ENCODE measurements at regions of chr7 and their contacts with region 1.

Region 1: DNA sequence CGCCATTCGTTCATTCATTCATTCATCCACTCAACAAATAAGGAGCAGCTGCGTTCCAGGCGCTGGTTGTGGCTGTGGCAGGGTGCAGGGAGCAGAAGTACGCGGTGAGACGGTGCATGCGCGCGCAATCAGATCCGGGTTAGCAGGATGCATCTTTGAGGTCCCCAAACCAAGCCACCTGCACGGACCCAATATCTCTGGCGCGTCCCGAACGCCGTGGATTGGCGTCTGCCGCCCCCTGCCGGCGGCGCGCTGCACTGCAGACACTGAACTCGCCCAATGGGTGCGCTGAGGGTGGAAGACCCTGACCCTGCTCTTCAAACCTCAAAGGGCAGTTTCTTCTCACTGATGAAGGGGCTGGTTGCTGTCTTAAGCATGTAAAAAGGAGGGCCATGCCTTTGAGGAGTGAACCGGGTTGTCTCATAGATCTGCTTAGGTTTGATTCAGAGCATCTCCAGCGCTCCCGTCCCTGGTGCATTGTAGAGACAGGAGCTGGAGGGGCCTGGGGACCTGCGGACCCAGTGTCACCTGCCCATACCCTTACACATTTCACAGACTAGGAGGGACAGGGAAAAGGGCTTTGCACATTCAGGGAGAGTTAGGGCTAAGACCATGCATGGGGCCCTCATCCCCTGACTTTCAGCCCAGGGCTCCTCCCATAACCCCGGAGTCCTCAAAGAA is 102.5 kb downstream of the RAMP3 start:
- DNase-seq: peak; percentile 77
- ATAC-seq: peak; percentile 87
- H3K4me3 Mint-ChIP-seq: no peak overlapping the region
- H3K27ac Mint-ChIP-seq: no peak overlapping the region
- H3K4me1 Mint-ChIP-seq: peaks cover 2% of the 10 kb centered on the region
- H3K27me3 Mint-ChIP-seq: peaks cover 20% of the 10 kb centered on the region

Region 2: DNA sequence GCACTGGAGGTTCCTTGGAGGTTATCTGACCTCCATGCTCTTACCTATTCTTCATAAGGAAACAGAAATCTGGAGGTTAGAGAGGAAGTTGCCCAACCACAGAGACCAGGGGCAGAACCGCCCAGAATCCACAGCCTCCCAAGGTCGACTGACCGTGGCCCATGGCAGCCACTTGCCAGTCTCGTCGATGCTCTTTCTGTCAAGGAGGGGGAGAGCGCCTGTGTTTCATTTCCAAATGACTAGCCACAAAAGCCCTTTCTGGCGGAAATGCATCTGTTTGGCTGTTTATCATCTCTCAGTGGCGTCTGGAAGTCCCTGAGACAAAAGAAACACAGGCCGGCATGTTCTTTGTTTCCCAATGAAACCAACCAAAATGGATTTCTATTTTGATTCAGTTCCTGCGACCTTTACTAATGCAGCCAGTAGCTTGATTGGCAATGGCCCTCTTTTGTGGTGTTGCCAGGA is 99.7 kb before region 1 on chr7:
- CTCF ChIA-PET with region 1: interaction called, 89 read pairs
- DNase-seq: no peak
- ATAC-seq: no peak
- H3K4me3 Mint-ChIP-seq: no peak overlapping the region
- H3K27ac Mint-ChIP-seq: no peak overlapping the region
- H3K4me1 Mint-ChIP-seq: peaks cover 6% of the 10 kb centered on the region
- H3K27me3 Mint-ChIP-seq: peaks cover 36% of the 10 kb centered on the region

Region 3: GRCh38 chr7:45246354-45246753 is 13.8 kb before region 1 on chr7:
- CTCF ChIA-PET with region 1: interaction called, 12 read pairs
- DNase-seq: no peak
- ATAC-seq: no peak
- H3K4me3 Mint-ChIP-seq: no peak overlapping the region
- H3K27ac Mint-ChIP-seq: no peak overlapping the region
- H3K4me1 Mint-ChIP-seq: peaks cover 12% of the 10 kb centered on the region
- H3K27me3 Mint-ChIP-seq: peaks cover 57% of the 10 kb centered on the region

Region 4: DNA sequence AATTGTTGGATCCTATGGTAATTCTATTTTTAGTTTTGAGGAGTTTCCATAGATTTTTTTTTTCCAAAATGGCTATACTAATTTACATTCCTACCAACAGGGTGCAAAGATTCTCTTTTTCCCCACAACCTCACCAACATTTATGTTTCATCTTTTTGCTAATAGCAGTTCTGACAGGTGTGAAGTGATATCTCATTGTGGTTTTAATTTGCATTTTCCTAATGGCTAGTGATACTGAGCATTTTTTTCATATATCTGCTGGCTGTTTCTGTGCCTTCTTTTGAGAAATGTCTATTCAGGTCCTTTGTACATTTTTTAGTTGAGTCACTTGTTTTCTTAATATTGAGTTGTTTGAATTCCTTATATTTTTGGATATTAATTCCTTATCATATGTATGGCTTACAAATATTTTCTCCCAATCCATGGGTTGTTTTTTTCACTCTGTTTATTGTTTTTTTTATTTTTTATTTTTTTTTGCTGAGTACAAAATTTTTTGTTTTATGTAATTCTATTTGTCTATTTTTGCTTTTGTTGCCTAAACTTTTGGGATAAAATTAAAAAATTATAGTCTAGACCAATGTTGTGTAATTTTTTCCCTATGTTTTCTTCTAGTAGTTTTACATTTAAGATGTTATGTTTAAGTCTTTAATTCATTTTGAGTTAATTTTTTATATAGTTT is 108.2 kb after region 1 on chr7:
- CTCF ChIA-PET with region 1: no interaction called
- DNase-seq: no peak
- ATAC-seq: no peak
- H3K4me3 Mint-ChIP-seq: no peak overlapping the region
- H3K27ac Mint-ChIP-seq: no peak overlapping the region
- H3K4me1 Mint-ChIP-seq: no peaks in the 10 kb centered on the region
- H3K27me3 Mint-ChIP-seq: peaks cover 30% of the 10 kb centered on the region